AG04449 (cell line): ENCODE measurements at regions of chr5 and their contacts with region 1.

Region 1: GRCh38 chr5:179880848-179881590 is 22.4 kb upstream of the MRNIP start:
- DNase-seq: no peak
- H3K4me3 ChIP-seq: no peak overlapping the region
- CTCF ChIP-seq: no peak

Region 2: DNA sequence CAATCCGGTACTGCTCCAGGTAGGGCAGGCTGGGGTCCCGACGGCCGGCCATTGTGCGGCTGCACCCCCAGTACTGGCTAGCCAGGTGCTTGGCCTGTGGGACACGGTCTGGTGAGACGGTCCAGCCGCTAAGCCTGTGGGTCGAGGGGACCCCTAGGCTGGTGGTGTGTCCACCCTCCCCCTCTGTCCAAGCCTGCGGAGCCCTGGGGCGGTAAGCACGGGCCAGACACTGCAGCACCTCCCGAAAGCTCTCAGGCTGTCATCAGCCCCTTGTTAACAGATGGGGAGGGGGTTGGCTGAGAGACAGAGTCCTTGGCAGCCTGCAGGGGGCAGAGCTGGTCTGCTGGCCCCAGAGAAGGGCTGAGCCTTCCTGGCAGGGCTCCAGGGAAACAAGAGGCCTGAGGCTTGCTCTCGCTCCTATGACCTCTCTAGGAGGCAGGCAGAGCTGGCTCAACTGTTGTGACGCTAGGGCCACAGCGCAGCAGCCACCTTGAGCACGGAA is 10.6 kb before region 1 on chr5:
- CTCF ChIA-PET with region 1: interaction called, 10 read pairs
- POLR2A ChIA-PET with region 1: interaction called, 3 read pairs
- DNase-seq: no peak
- H3K4me3 ChIP-seq: no peak overlapping the region
- CTCF ChIP-seq: peak; percentile 41